Activated CD8-positive, alpha-beta T cell treated with anti-CD3 and anti-CD28 coated beads, Interleukin-2, amount 10 ng/mL, durations not matched to agents 7 days and 5 days (primary cell): ENCODE measurements at regions of chr11 and their contacts with region 1.

Region 1: DNA sequence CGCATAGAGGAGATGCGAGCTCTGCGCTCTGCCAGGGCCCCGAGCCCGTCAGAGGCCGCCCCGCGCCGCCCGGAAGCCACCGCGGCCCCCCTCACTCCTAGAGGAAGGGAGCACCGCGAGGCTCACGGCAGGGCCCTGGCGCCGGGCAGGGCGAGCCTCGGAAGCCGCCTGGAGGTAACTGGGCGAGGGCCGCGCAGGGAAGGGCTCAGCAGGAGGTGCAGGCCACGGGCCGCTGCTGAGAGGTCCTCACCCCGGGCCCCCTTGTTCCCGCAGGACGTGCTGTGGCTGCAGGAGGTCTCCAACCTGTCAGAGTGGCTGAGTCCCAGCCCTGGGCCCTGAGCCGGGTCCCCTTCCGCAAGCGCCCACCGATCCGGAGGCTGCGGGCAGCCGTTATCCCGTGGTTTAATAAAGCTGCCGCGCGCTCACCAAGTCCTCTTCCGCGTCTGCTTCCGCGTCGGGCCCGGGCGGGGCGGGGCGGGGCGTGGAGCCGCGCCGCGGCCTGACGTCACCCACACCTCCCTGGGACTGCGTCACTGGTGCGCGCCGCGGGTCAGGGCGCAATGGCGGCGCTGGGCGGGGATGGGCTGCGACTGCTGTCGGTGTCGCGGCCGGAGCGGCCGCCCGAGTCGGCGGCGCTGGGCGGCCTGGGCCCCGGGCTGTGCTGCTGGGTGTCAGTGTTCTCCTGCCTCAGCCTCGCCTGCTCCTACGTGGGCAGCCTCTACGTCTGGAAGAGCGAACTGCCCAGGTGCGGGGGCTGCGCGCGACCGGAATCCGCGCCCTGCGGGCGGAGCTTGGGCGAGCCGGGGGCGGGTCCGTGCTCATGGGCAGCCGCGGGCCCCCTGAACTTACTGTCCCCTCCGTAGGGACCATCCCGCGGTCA is at the start of gene RCE1:
- DNase-seq: peak; percentile 93
- ATAC-seq: peak; percentile 87
- H3K4me3 Mint-ChIP-seq: peak within 1 kb of the TSS; percentile 93
- H3K27ac Mint-ChIP-seq: peak within 1 kb of the TSS; percentile 94
- H3K4me1 Mint-ChIP-seq: peaks cover 55% of the 10 kb centered on the region
- H3K27me3 Mint-ChIP-seq: no peaks in the 10 kb centered on the region
- total RNA-seq, gene RCE1: 23.1 to 27.3 TPM

Region 2: GRCh38 chr11:66762088-66762487 is 81.0 kb before region 1 on chr11:
- CTCF ChIA-PET with region 1: no interaction called
- POLR2A ChIA-PET with region 1: no interaction called
- DNase-seq: no peak
- ATAC-seq: no peak
- H3K4me3 Mint-ChIP-seq: no peak overlapping the region
- H3K27ac Mint-ChIP-seq: no peak overlapping the region
- H3K4me1 Mint-ChIP-seq: no peaks in the 10 kb centered on the region
- H3K27me3 Mint-ChIP-seq: no peaks in the 10 kb centered on the region

Region 3: DNA sequence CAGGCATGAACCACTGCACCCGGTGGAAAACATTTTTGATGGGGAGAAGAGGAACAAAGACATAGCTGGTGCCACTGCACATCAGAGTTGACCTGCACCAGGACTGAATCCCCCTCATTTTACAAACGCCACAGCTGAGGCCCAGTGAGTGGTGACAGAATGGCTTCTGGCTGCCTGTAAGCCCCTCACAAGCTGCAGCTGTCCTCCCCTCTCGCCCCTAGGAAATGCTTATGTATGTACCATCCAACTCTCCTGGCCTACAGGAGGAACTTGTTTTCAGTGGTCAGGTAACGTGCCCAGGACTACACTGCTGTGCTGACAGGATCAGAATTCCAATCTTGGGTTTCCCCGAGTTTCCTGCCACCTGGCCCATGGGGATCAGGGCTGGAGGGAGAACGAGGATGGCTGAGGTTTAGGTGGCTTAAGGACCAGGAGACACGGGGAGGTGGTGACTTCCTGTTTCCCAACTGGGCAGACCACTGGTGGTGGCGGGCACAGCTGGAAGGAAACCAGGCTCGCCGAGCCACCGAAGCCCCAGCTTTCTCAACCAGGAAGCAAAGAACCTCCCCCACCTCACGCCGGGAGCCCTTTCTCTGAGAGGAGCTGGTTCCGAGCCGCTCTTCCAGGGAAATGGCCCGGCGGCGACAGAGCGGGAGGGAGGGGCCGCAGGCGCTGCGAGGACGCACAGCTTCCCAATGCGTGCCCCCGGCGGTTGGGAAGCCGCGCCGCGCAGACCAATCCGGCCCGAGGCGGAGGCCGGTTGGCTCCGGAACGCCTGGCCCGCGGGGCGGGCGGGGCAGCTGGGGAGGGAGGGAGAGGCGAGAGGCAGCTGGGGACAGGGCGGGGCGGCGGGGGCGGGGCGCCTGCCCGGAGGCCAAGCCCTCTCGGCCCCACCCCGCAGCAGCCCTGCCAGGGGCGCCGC is 12.7 kb after region 1 on chr11:
- CTCF ChIA-PET with region 1: interaction called, 23 read pairs
- POLR2A ChIA-PET with region 1: interaction called, 92 read pairs
- DNase-seq: peak; percentile 91
- ATAC-seq: peak; percentile 85
- H3K4me3 Mint-ChIP-seq: peak overlapping the region; percentile 88
- H3K27ac Mint-ChIP-seq: peak overlapping the region; percentile 84
- H3K4me1 Mint-ChIP-seq: peaks cover 35% of the 10 kb centered on the region
- H3K27me3 Mint-ChIP-seq: no peaks in the 10 kb centered on the region

Region 4: GRCh38 chr11:66883016-66883968 is 40.2 kb after region 1 on chr11:
- CTCF ChIA-PET with region 1: interaction called, 13 read pairs
- POLR2A ChIA-PET with region 1: interaction called, 9 read pairs
- DNase-seq: peak; percentile 73
- ATAC-seq: peak; percentile 76
- H3K4me3 Mint-ChIP-seq: no peak overlapping the region
- H3K27ac Mint-ChIP-seq: no peak overlapping the region
- H3K4me1 Mint-ChIP-seq: peaks cover 18% of the 10 kb centered on the region
- H3K27me3 Mint-ChIP-seq: no peaks in the 10 kb centered on the region